Dendritic cell treated with granulocyte-macrophage colony-stimulating factor and Interleukin-4, amounts not matched to agents 40 ng/mL and 50 ng/mL, for 4 days (primary cell): ENCODE measurements at regions of chr9 and their contacts with region 1.

Region 1: DNA sequence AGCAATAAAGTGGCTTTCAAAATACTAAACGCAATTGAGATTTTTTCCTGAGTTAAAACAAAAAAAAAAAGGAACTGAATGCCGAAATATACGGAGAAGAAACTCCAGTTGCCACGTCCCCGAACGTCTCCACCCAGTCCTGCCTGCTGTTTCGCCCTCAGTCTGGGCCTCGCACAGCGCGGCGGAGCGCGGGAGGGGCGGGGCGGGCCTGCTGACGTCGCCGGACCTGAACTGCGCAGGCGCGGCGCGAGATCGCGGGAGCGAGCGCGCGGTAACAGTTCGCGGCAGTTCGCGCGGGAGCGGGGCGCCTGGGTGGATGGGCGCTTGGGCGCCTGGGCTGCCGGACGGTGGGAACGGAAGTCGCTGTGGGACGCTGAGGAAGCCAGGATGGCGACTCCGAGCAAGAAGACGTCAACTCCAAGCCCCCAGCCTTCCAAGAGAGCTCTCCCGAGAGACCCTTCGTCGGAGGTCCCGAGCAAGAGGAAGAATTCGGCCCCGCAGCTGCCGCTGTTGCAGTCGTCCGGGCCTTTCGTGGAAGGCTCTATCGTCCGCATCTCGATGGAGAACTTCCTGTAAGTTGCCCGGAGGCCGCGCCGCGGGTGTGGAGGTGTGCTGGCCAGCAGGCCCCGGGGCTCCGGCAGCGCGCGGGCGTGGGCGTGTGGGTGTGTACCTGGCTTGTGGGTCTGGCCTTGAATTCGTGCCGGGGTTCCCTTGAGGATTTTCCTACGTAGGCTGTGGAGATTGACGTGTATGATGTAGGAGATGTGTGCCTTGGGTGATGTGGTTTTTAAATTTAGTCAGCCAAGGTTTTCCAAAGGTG is at the start of gene SMC5:
- H3K4me3 Mint-ChIP-seq: peak within 1 kb of the TSS; percentile 85
- H3K27ac Mint-ChIP-seq: peak within 1 kb of the TSS; percentile 95
- H3K4me1 Mint-ChIP-seq: peaks cover 51% of the 10 kb centered on the region
- H3K27me3 Mint-ChIP-seq: no peaks in the 10 kb centered on the region

Region 2: GRCh38 chr9:70609542-70610286 is 350.8 kb after region 1 on chr9:
- intact Hi-C with region 1: loop called (anchors 5 kb)
- H3K4me3 Mint-ChIP-seq: no peak overlapping the region
- H3K27ac Mint-ChIP-seq: no peak overlapping the region
- H3K4me1 Mint-ChIP-seq: peaks cover 23% of the 10 kb centered on the region
- H3K27me3 Mint-ChIP-seq: no peaks in the 10 kb centered on the region